GM10248 (cell line): ENCODE measurements at regions of chr9 and their contacts with region 1.

Region 1: GRCh38 chr9:98536542-98537173 is 172.1 kb downstream of the GABBR2 start:
- DNase-seq: peak; percentile 59
- CTCF ChIP-seq: peak; percentile 58

Region 2: DNA sequence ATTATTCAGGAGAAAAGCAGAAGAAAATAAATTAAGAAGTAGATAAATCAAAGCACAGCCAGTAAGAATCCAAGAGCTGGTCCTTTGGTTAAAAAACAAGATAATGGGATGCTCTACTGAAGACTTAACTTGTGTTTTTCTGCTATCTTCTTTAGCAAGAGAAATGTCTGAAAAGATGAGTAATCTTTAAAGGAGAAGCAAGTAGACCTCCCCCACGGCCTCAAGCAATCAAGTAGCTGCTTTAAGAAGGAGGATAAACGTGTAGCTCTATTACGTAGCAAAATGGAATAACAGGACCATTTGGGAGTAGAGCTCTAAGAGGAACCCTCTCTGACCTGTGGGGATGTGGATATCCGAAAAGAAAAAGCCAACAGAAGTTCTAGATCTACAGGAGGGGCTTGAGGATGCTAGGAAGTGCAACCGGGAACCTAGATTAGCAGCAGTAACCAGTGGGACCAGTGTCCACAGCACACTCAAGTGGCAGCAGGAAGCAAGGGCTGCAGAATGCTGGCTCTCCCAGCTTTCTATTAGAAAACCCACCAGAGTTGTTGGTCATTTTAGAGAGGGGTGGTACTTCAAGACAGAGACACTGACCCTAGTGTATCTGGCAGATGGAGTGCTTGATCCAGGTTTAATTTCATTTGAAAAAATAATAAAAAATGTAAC is 13.3 kb before region 1 on chr9:
- CTCF ChIA-PET with region 1: interaction called, 11 read pairs
- POLR2A ChIA-PET with region 1: no interaction called
- DNase-seq: no peak
- CTCF ChIP-seq: no peak

Region 3: DNA sequence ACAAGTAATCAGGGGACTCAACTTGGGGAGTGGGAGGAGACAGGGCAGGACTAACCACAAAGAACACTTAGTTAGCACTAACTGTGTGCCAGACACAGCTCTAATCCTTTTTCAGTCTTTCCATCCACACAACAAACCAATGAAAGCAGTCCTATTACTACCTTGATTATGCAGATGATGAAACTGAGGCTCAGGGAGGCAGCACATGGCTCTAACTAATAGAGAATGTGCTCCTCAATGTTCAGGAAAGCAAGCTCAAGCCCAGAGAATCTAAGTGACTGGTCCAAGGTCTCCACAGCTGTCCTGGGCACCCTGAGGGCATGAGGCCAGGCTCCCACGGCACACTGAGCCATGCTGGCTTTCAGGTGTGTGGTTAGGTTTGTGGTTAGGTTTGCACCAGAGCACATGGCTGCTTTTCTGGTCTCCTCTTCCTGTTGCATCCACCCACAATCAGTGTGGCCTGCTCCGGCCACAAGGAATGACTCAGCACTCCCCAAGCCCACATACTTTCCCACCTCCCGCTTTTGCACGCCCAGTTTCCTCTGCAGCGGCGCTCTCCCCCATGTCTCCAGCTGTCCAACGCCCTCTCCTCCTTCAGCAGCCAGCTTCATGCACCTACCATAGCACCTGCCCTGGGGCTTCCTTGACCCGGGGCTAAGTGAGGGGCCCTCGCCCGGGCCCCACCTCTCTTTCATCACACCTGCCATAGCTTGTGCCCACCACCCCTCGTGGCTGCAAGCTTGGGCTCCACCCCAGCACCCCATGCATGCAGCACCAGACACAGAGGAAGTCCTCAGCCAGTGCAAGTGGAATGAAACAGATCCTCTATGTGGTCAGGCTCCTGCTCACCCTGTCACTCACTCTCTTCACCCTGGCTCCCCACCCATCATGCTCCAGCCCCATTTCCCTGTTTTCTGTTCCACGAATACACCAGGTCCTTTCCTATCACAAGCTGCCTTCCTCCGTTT is 39.0 kb after region 1 on chr9:
- CTCF ChIA-PET with region 1: interaction called, 12 read pairs
- POLR2A ChIA-PET with region 1: no interaction called
- DNase-seq: peak; percentile 73
- CTCF ChIP-seq: no peak